Activated B cell treated with CpG ODN at 0.5 μM for 24 hours (primary cell): ENCODE measurements at regions of chr6 and their contacts with region 1.

Region 1: DNA sequence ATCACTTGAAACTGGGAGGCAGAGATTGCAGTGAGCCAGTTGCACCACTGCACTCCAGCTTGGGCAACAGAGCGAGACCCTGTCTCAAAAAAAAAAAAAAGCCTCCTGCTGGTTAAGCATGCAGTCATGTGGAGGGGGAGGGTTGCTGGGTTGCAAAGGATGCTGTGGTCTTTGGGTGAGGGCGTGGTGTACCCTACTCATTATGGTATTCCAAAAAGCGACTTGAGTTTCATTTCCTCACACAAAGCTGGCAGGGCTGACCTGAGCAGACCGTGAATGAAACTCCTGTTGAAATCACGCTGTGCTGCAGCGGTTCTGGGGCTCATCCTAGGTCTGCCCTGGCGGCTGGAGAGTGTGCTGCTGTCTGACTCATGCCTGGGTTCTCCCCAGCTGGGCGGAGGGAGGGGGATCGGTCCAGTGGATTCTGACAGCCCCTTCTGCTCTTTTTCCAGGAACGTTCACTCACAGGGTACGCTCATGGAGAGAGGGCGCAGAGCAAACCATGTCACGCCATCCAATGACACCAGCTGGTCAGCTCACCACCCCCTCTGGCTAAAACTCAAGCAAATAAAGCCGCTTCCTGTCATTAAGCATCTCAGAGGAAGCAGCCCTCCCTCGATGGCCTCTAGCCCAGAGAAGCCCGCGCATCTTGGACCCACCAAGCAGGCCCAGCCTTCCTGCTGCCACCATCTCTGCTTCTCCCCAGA is 166.2 kb downstream of the SCML4 start:
- DNase-seq: peak; percentile 70
- ATAC-seq: peak; percentile 89
- H3K4me3 Mint-ChIP-seq: peak overlapping the region; percentile 82
- H3K27ac Mint-ChIP-seq: peak overlapping the region; percentile 96
- H3K4me1 Mint-ChIP-seq: peaks cover 67% of the 10 kb centered on the region
- H3K27me3 Mint-ChIP-seq: no peaks in the 10 kb centered on the region
- CTCF ChIP-seq: no peak

Region 2: DNA sequence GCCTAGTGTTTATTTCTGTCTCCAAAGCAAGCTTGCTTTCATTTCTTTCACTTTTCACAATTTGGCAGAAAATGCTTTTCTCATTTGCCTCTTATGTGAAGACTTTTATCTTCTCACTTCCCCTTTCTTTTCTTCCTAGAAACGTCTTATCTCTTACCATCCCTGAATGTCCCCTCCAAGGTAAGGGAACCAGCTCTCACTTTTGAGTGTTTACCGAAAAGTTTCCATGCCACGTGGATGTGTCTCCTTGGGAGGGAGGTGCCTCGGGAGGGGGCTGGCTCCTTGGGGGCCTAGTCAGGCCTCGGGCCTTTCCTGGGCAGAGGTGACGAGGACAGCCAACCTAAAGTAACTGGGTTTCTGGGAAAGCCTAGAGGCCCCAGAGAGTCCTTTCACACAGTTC is 810.8 kb before region 1 on chr6:
- CTCF ChIA-PET with region 1: no interaction called
- POLR2A ChIA-PET with region 1: no interaction called
- intact Hi-C with region 1: no loop called
- DNase-seq: peak; percentile 19
- ATAC-seq: peak; percentile 26
- H3K4me3 Mint-ChIP-seq: peak overlapping the region; percentile 45
- H3K27ac Mint-ChIP-seq: peak overlapping the region; percentile 83
- H3K4me1 Mint-ChIP-seq: peaks cover 60% of the 10 kb centered on the region
- H3K27me3 Mint-ChIP-seq: no peaks in the 10 kb centered on the region
- CTCF ChIP-seq: no peak

Region 3: GRCh38 chr6:107318100-107318736 is 339.7 kb before region 1 on chr6:
- CTCF ChIA-PET with region 1: interaction called, 7 read pairs
- POLR2A ChIA-PET with region 1: interaction called, 4 read pairs
- intact Hi-C with region 1: loop called (anchors 1 kb)
- DNase-seq: no peak
- ATAC-seq: peak; percentile 85
- H3K4me3 Mint-ChIP-seq: no peak overlapping the region
- H3K27ac Mint-ChIP-seq: no peak overlapping the region
- H3K4me1 Mint-ChIP-seq: peaks cover 15% of the 10 kb centered on the region
- H3K27me3 Mint-ChIP-seq: no peaks in the 10 kb centered on the region
- CTCF ChIP-seq: no peak

Region 4: GRCh38 chr6:107369493-107369892 is 288.4 kb before region 1 on chr6:
- CTCF ChIA-PET with region 1: no interaction called
- POLR2A ChIA-PET with region 1: no interaction called
- intact Hi-C with region 1: no loop called
- DNase-seq: no peak
- ATAC-seq: no peak
- H3K4me3 Mint-ChIP-seq: no peak overlapping the region
- H3K27ac Mint-ChIP-seq: no peak overlapping the region
- H3K4me1 Mint-ChIP-seq: no peaks in the 10 kb centered on the region
- H3K27me3 Mint-ChIP-seq: no peaks in the 10 kb centered on the region
- CTCF ChIP-seq: no peak

Region 5: DNA sequence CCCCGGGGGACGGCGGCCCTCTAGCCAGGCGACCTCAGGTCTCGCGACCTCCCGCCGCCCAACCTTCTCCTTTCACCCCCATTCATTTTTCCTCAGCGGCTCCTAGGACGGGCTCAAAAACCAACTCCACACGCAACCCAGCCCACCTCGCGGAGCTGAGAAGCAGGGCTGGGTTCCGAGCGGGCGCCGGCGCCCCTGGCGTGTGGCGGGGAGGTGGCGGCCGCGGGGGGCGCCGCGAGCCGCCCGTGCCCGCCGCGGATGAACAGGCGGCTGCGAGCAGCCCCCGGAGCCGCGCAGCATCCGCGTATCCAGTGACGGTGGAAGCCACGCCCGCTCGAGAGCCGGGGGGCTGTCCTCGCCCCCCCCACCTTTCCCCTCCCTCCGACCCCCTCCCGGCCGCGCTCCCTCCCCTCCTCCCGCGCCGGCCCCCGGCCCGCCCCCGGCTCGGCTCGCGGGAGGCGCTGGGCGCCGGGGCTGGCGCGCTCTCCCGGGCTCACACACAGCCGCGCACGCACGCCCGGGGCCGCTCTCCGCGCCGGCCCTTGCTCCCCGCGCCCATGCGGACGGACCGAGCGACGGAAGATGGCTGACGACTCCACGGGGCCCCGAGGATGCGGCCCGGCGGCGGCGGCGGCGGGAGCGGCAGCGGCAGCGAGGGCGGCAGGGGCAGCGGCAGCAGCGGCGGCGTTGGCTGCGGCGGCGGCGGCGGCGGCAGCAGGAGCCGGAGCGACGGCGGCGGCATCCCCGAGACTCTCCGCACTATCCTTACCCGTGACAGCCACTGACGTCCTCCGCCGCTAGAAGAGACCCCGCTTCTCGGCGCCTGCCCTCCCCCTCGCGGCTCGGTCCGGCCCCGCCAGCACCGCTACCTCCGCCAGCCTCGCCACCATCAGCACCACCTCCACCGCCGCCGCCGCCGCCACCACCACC is 168.0 kb before region 1 on chr6 and contains the start of gene SOBP:
- CTCF ChIA-PET with region 1: interaction called, 3 read pairs
- POLR2A ChIA-PET with region 1: no interaction called
- intact Hi-C with region 1: loop called (anchors 1 kb)
- DNase-seq: peak; percentile 58
- ATAC-seq: peak; percentile 60
- H3K4me3 Mint-ChIP-seq: peak within 1 kb of the TSS; percentile 90
- H3K27ac Mint-ChIP-seq: peak within 1 kb of the TSS; percentile 63
- H3K4me1 Mint-ChIP-seq: peaks cover 26% of the 10 kb centered on the region
- H3K27me3 Mint-ChIP-seq: peaks cover 28% of the 10 kb centered on the region
- CTCF ChIP-seq: no peak
- total RNA-seq, gene SOBP: 1.1 TPM in 2 replicates

Region 6: GRCh38 chr6:107645800-107646575 is 11.9 kb before region 1 on chr6:
- CTCF ChIA-PET with region 1: interaction called, 7 read pairs
- POLR2A ChIA-PET with region 1: interaction called, 29 read pairs
- intact Hi-C with region 1: loop called (anchors 1 kb)
- DNase-seq: no peak
- ATAC-seq: no peak
- H3K4me3 Mint-ChIP-seq: no peak overlapping the region
- H3K27ac Mint-ChIP-seq: no peak overlapping the region
- H3K4me1 Mint-ChIP-seq: peaks cover 65% of the 10 kb centered on the region
- H3K27me3 Mint-ChIP-seq: no peaks in the 10 kb centered on the region
- CTCF ChIP-seq: no peak

Region 7: DNA sequence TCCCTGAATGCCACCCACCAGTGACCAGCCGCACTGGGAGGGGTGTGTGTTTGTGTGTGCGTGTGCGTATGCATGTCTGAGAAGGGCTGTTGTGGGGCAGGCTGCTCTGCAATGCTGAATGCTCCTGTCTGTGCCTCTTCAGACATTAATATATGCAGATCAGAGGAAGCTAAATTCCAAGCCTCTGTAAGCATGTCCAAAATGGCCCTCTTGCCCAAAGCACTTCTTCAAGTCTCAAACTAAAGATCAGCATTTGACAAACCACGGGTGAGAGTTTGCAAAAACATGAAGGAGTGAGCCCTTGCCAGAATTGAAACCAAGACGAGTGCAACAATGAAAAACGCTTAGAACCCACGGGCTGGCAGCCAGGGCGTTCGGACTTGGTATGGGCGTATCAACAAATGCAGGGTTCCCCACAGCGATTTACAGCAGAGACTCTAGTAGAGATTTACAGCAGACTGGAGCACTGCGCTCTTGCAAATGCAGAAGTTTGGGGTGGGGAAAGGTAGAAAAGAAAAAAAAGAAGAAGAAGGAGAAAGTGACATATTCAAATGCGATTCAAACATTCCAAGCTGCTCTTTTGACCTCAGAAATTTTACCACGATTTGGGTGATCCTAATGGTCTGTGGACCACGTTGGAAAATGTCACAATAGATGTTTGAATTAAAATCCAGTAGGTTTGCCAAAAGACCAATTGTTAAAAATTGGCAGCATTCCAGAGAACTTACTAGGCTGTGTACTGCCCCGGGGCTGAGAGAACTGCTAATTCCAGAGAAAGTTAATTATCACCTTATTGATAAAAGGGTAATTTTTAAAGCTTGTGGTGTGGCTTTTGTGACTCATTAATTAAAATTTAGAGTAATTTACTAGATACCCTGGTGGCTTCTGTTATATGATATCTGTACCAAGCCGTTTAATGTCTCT is 162.7 kb after region 1 on chr6:
- CTCF ChIA-PET with region 1: no interaction called
- POLR2A ChIA-PET with region 1: interaction called, 7 read pairs
- intact Hi-C with region 1: loop called (anchors 5 kb)
- DNase-seq: no peak
- ATAC-seq: peak; percentile 23
- H3K4me3 Mint-ChIP-seq: peak overlapping the region; percentile 86
- H3K27ac Mint-ChIP-seq: peak overlapping the region; percentile 85
- H3K4me1 Mint-ChIP-seq: peaks cover 74% of the 10 kb centered on the region
- H3K27me3 Mint-ChIP-seq: no peaks in the 10 kb centered on the region
- CTCF ChIP-seq: no peak